ENCODE measurements at regions of chr4 and their contacts with region 1.

Region 1: DNA sequence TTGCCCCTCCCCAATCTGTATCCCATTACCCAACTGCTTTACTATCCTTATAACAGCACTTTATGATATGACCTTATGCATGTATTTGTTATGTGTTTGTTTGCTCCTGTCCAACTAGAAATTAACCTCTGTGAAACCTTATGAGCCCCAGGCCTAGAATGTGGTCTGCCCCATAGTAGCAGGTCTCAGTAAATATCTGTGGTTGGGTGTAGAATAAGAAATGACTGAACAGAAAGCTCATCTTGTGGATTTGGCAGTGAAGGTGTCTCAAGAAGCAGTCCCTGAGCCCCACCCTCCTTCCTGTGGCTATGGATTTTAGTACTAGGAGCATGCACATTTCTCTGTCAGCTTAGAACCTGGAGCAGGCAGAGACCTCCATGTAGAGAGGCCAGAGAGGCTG is 229.0 kb upstream of the LCORL start:
- DNase-seq: no peak

Region 2: DNA sequence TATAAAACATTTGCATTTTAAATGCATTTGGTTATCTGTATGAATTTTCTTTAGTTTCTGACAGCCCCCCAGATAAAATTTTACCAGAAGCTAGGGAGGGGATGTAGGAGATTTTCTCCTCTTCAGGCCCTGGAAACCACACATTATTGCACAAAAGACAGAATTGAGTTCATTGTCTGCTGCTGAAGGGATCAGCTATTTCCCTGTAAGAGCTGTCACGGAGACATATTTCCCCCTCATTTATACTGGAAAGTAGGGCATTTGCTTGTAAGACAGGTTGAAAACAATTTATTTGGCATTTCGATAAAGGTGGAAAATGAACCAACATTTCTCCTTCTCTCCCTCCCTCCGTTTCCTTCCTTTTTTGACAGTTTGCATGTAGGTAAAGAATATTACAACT is 12.3 kb after region 1 on chr4:
- intact Hi-C with region 1: no loop called
- DNase-seq: no peak

Region 3: GRCh38 chr4:19945979-19946380 is 1695.4 kb after region 1 on chr4:
- intact Hi-C with region 1: loop called in 1 of 2 experiments (anchors 5 kb)
- DNase-seq: no peak

Measured in posterior vena cava (tissue), 2 donors.